Mucosa of descending colon (tissue), 3 donors: ENCODE measurements at regions of chr6 and their contacts with region 1.

Region 1: DNA sequence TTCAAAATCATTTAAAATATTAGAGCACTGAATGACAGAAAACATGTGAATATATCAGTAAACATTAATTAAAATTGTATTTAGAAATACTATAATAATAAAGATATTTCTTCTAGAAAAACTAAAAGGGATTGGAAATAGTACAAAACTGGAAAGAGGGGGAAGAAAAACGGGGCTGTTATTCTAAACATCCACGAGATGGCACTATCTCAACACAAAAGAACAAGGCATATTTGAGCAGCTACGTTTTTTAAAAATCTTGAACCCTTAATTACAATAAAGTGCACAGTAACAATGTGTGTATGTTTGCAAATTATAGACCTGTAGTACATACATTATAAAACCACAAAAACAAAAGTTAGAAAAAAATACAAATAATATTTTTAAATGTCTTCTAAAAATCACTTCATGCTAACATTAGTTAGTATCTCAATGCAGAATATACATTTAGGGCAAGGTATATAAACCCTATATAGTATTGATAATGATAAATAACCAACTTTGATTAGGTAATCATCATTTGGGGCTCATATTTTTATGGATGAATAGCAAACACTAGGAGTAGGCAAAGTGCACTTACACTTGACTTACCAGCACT is 42.5 kb upstream of the PNISR start:
- DNase-seq: no peak
- ATAC-seq: no peak
- H3K4me3 ChIP-seq: no peak overlapping the region
- H3K4me1 ChIP-seq: no peaks in the 10 kb centered on the region
- CTCF ChIP-seq: no peak

Region 2: DNA sequence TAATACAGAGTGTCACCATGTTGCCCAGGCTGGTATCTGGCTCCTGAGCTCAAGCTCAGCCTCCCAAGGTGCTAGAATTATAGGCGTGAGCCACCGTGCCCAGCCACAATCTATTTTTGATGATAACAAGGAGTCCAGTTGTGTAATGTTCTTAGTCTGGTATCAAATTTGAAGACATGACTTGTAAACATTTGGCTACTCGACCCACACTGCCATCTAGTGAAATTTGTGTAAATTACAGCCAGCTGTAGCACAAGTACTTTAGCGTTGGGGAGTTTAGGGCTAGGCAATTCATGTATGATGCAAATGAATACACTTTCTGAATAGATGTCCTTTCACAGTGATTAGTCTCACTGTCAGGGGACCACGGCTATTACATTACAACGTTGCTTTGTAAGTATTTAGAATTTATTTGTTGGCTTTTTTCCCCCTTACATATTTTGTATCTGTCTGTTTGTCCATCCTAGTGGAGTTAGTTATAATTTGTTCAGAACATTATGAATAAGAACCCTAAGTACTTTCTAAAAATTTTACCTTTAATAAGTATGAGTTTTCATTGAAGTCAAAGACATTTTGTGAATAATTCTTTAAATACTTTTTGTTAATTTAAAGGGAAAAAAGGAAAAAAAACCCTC is 278.8 kb after region 1 on chr6:
- intact Hi-C with region 1: loop called (anchors 10 kb)
- DNase-seq: peak in 1 of 3 donors; percentile 78
- ATAC-seq: peak; percentile 84
- H3K4me3 ChIP-seq: no peak overlapping the region
- H3K4me1 ChIP-seq: no peaks in the 10 kb centered on the region
- CTCF ChIP-seq: peak; percentile 65